Aorta (tissue), 5 donors: ENCODE measurements at regions of chr1 and their contacts with region 1.

Region 1: DNA sequence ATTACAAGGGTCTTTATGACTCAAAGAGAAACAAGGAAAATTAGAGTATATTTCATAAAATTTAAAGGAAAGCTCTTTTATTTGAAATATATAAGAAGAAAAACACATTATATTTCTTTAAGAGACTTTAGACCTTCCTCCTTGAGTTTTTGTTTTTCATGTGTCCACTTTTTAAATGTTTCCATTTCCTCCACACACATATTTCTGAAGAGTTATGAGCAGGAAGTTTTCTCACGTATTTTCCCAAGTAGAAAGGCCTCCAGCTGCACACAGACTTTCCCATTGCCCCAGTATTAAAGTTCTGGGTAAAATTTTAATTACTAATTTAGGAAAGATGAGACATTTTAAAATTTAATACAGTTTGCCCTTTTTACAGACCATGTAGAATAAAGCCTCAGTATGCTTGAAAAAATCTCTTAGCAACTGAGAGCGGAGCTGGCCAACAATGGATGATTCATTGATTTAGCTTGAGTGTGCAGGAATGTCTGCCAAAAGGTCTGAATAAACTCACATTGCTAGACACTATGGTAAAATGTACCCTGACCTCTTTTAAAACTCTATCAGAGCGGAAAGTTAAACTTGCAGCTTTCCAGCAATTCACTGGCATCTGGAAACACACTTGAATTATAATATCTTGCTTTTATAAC is 57.9 kb downstream of the DDAH1 start:
- DNase-seq: peak in 1 of 2 donors; percentile 50
- ATAC-seq: peak; percentile 92
- H3K4me3 ChIP-seq: no peak overlapping the region
- H3K27ac ChIP-seq: no peak overlapping the region
- H3K4me1 ChIP-seq: peaks cover 7 to 16% of the 10 kb centered on the region in 2 donors
- H3K27me3 ChIP-seq: no peaks in the 10 kb centered on the region

Region 2: DNA sequence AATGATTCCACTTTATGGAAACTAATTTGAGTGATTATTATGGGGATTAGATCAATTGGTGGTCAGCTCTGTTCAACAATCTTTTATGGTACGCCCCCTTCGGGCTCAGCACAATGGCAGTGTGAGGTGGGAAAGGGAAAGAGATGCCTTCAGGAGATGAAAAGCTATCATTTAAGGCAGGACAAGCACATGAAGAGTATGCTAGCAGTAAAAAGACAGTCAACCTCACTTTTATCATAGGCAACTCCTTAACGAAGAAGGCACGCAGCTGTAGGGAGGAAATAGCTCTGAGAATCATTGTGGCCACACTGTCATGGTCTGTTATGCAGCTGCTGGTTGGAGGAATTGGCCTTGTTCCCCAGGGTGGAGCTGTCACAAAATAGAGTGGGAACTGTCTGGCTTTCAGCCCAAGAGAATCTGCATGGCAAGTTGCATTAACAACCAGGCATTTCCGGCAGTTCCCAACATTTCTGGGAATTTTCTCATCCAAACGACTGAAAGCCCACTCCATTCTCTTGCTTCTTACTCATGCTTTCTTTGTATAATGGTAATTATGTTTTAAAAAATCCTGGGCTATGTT is 76.2 kb before region 1 on chr1:
- intact Hi-C with region 1: loop called (anchors 5 kb)
- DNase-seq: peak in 1 of 2 donors; percentile 66
- ATAC-seq: no peak
- H3K4me3 ChIP-seq: no peak overlapping the region
- H3K27ac ChIP-seq: peak overlapping the region; percentile 95
- H3K4me1 ChIP-seq: peaks cover 0 to 15% of the 10 kb centered on the region in 2 donors
- H3K27me3 ChIP-seq: no peaks in the 10 kb centered on the region

Region 3: GRCh38 chr1:85366391-85367170 is 40.4 kb before region 1 on chr1:
- intact Hi-C with region 1: loop called in 1 of 2 experiments (anchors 5 kb)
- DNase-seq: no peak
- ATAC-seq: no peak
- H3K4me3 ChIP-seq: no peak overlapping the region
- H3K27ac ChIP-seq: peak overlapping the region in 1 of 2 donors; percentile 67
- H3K4me1 ChIP-seq: peaks cover 1 to 11% of the 10 kb centered on the region in 2 donors
- H3K27me3 ChIP-seq: no peaks in the 10 kb centered on the region

Region 4: GRCh38 chr1:85464497-85465098 is 57.6 kb after region 1 on chr1:
- intact Hi-C with region 1: loop called (anchors 10 kb)
- DNase-seq: peak; percentile 80 to 91
- ATAC-seq: peak; percentile 82
- H3K4me3 ChIP-seq: peak overlapping the region; percentile 35 to 86
- H3K27ac ChIP-seq: peak overlapping the region; percentile 33 to 52
- H3K4me1 ChIP-seq: peaks cover 4 to 5% of the 10 kb centered on the region in 2 donors
- H3K27me3 ChIP-seq: no peaks in the 10 kb centered on the region

Region 5: DNA sequence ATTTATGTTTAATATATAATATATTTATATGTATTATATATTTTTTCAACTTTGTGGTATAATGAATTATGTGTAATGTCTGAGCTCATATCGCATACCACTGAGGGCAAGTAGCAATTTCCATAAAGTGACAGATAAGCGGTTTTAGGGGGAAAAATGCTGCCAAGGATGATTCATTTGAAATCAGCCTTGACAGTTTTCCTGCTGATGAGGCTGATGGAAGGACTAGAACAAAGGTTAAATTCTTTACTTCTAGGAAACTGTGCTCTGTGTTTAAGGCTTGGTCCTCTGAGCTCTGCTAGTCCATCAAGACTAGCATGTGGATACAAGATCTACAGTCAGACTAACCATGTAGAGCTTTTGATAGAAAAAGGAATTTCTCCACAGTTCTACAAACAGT is 77.3 kb after region 1 on chr1:
- intact Hi-C with region 1: no loop called
- DNase-seq: no peak
- ATAC-seq: no peak
- H3K4me3 ChIP-seq: no peak overlapping the region
- H3K27ac ChIP-seq: no peak overlapping the region
- H3K4me1 ChIP-seq: no peaks in the 10 kb centered on the region
- H3K27me3 ChIP-seq: no peaks in the 10 kb centered on the region

Region 6: GRCh38 chr1:85576642-85577418 is 169.8 kb after region 1 on chr1:
- intact Hi-C with region 1: loop called in 1 of 2 experiments (anchors 5 kb)
- DNase-seq: peak; percentile 93 to 97
- ATAC-seq: peak; percentile 83
- H3K4me3 ChIP-seq: peak overlapping the region; percentile 64 to 78
- H3K27ac ChIP-seq: peak overlapping the region; percentile 70 to 99
- H3K4me1 ChIP-seq: no peaks in the 10 kb centered on the region
- H3K27me3 ChIP-seq: no peaks in the 10 kb centered on the region

Region 7: GRCh38 chr1:85962457-85962856 is 555.4 kb after region 1 on chr1:
- intact Hi-C with region 1: no loop called
- DNase-seq: no peak
- ATAC-seq: no peak
- H3K4me3 ChIP-seq: no peak overlapping the region
- H3K27ac ChIP-seq: no peak overlapping the region
- H3K4me1 ChIP-seq: no peaks in the 10 kb centered on the region
- H3K27me3 ChIP-seq: no peaks in the 10 kb centered on the region